Posterior cingulate gyrus (tissue), 11 donors: ENCODE measurements at regions of chr14 and their contacts with region 1.

Region 1: DNA sequence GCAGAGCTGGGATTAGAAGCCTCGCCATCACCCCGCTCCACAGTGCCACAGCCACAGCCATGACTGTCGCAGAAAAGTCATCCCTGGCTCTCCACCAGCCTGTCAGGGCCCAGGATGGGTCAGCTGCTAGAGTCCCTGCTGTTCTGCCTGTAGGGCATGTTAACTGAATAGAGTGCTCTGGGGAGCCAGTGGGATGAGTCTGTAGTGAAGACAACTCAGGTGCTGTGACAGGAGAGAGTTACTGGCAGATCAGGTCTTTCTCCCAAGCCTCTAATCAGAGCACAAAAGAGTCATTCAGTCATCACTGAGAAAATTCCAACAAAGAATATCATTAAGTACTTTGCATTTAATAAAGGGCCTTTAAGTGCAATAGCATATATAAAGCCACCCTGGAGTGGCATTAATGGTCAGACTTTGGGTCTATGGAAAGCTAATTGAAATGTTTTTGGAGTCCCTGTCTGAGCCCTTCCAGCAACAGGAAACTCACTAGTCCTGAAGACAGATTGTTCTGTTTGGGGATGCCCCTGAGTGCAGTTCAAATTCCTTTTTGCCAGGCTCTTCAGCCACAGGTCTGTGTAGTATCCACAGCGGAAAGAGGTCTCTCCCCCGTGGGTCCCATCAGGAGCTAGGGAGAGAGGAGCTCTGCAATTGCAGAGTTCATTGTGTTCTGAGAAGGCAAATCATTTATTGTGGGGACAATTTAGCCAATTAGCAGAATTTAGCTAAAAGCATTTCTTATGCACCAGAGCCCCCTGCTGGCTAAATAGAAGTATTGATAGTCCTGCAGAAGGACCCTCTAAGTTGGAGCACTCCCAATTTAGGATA is 45.2 kb upstream of the C14orf132 start:
- DNase-seq: peak in 3 of 10 donors; percentile 41 to 75 (median 71)

Region 2: DNA sequence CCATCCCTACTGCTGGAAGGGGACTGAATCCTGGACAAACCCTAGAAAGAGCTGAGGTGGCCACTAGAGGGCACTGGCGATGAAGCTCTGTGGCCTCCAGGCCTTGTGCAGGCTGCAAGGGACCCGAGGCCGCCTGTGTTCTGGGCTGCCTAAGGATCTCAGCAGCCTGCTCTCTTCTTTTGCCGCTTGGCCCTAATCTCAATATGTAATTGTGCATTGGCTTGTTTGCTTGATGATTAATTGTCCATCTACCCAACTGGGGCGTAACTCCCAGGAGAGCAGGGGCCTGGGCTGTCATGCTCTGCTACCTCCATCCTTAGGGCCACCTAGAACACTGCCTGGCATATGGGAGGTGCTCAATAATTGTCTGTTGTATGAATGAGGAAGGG is 551.4 kb before region 1 on chr14:
- intact Hi-C with region 1: loop called (anchors 10 kb)
- DNase-seq: peak; percentile 77 to 98 (median 89)

Region 3: GRCh38 chr14:95561001-95561412 is 433.0 kb before region 1 on chr14:
- intact Hi-C with region 1: loop called (anchors 1 kb)
- DNase-seq: peak; percentile 80 to 98 (median 92)

Region 4: DNA sequence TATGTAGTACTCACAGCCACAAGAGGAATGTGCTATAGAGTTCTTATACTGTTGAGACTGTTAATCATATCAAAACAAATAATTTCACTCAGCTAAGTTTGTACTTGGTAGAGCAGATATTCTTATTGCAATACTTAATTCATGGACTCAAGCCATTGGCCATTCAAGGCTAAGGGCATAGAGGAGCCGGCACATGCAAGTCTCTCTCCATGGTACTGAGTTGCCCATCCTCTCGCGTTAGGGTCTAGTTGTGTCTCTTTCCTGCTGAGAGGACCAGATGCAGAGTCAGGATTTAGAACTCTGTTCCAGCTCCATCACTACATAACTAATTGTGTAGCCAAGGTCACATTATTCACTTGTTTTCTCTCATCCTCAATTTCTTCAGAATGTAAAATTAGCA is 131.7 kb before region 1 on chr14:
- intact Hi-C with region 1: no loop called
- DNase-seq: no peak

Region 5: GRCh38 chr14:96100161-96101029 is 106.4 kb after region 1 on chr14:
- intact Hi-C with region 1: loop called (anchors 1 kb)
- DNase-seq: peak; percentile 65 to 96 (median 83)

Region 6: DNA sequence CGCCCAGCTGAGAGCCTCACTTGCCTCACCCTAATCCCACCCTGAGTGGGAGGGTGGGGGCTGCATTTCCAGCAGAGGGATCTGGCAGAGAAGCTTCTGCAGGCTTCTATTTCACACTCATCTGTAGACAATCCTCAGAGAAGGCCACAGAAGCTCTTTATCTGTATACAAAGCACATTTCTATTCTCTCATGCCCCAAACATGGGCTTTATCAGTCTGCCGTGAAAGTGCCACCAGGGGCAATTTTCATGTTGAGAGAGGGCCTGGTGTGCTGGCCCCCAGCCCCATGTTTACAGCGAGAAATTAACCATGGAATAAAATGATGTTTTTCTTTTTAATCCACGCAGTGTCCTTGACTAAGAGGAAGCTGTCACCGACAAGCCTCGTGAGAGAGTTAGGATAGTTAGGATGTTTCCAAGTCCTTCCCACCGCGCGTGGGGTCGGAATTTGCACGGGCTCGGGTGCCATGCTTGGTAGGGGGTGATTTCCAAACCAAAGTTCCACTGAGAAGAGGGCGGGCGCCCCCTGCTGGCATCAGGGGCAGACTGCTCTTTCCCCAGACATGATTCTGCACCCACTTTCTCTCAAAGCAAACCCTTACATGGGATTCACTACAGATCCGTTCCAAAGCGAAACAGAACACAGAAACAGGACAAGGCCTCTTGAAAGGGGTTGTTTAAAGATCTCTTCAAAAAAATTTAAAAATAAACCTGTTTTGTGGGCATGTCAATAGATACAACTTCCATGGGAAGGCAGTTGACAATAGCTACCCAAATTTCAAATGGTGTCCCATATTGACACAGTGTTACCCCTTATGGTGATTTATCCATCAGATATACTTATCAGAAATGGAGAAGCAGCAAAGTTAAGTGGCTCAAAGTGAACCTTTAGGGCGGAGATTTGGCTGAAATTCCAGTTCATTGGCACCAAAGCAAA is 281.5 kb after region 1 on chr14:
- intact Hi-C with region 1: loop called (anchors 2 kb)
- DNase-seq: peak; percentile 69 to 97 (median 87)